Activated CD4-positive, alpha-beta memory T cell treated with anti-CD3 and anti-CD28 coated beads, Interleukin-2, amount 10 ng/mL, durations not matched to agents 7 days and 5 days (primary cell): ENCODE measurements at regions of chr22 and their contacts with region 1.

Region 1: DNA sequence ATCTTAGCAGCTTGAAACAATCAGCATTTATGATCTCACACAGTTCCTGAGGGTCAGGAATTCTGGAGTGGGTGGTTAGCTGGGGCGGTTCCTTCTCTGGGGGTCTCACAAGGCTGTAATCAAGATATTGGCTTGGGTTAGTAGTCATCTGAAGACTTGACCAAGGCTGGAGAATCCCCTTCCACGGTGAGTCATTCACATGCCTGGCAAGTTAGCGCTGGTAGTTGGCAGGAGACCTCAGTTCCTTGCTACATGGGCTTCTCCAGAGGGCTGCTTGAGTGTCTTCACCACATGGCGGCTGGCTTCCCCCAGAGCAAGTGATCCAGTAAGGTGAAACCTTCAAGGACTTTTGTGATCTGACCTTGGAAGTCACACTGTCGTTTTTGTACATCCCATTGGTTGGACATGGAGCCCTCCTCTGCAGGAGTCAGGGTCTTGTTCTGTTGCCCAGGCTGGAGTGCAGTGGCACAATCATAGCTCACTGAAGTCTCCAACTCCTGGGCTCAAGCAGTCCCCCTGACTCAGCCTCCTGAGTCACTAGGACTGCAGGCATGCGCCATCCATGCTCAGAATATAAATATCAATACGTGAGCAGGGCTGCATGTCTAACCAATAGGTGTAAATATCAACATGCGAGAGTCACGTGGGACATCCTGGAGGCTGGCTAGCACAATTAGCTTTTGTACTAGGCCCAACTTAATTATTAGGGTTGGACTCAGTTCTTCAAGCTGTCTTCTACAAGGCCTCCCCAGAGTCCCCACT is 7.2 kb upstream of the NIPSNAP1 start:
- DNase-seq: no peak
- H3K4me3 Mint-ChIP-seq: no peak overlapping the region
- H3K27ac Mint-ChIP-seq: no peak overlapping the region
- H3K4me1 Mint-ChIP-seq: peaks cover 10% of the 10 kb centered on the region
- H3K27me3 Mint-ChIP-seq: no peaks in the 10 kb centered on the region

Region 2: GRCh38 chr22:29553351-29554224 is 34.5 kb before region 1 on chr22 and contains the start of gene THOC5:
- CTCF ChIA-PET with region 1: interaction called, 5 read pairs
- POLR2A ChIA-PET with region 1: interaction called, 10 read pairs
- DNase-seq: peak; percentile 92
- H3K4me3 Mint-ChIP-seq: peak within 1 kb of the TSS; percentile 94
- H3K27ac Mint-ChIP-seq: peak within 1 kb of the TSS; percentile 83
- H3K4me1 Mint-ChIP-seq: peaks cover 24% of the 10 kb centered on the region
- H3K27me3 Mint-ChIP-seq: no peaks in the 10 kb centered on the region
- total RNA-seq, gene THOC5: 41.6 to 56.2 TPM